ENCODE measurements at regions of chr1 and their contacts with region 1.

Region 1: GRCh38 chr1:171530676-171531075 is 45.3 kb downstream of the PRRC2C start:
- DNase-seq: no peak
- ATAC-seq: no peak

Region 2: GRCh38 chr1:171583581-171584201 is 53.0 kb after region 1 on chr1:
- intact Hi-C with region 1: loop called in 1 of 2 experiments (anchors 10 kb)
- DNase-seq: no peak
- ATAC-seq: no peak

Region 3: GRCh38 chr1:171683870-171684269 is 153.2 kb after region 1 on chr1:
- intact Hi-C with region 1: no loop called
- DNase-seq: no peak
- ATAC-seq: no peak

Measured in left colon (tissue), 2 donors.